OCI-LY7 (cell line): ENCODE measurements at regions of chr7 and their contacts with region 1.

Region 1: DNA sequence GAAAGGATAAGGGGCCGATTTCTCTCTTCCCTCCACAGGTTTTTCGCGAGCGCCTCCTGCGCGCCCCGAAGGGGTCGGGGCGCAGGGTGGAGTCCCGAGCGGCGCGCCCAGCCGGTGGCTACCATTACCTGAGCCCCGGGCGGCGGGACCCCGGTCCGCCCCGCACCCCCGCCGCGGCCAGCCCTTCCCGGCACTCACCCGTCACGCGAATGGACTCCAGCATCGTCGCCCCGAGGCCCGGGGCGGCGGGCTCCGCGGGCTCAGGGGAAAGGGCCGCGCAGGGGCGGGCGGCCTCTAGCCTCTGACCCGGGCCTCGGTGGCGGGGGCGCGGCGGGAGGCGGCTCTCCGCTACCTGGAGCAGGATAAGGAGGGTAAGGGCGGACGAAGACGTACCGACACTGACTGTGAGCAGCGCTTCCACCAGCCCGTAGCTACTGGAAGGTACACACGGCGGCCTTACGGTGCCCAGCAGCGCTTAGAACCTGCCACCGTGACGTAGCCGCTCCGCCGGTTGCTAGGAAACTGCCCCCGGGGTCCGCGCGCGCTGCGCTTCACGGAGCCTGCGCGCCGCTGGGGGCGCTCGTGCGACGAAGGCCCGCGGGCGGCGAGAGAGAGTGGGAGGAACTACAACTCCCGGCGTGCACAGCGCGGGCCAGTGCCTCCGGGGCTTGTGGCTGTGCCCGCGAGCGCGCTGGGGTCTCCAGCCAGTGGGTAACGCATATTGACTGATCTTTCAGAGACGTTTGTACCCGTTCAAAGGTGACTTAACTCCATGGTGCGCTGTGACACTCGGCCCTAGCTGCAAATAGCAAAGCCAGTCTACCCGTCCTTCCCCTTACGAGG is 22.7 kb upstream of the ANLN start:
- DNase-seq: peak; percentile 90
- H3K4me3 ChIP-seq: peak overlapping the region; percentile 71
- H3K27ac ChIP-seq: no peak overlapping the region
- H3K4me1 ChIP-seq: peaks cover 5% of the 10 kb centered on the region
- CTCF ChIP-seq: peak; percentile 84

Region 2: DNA sequence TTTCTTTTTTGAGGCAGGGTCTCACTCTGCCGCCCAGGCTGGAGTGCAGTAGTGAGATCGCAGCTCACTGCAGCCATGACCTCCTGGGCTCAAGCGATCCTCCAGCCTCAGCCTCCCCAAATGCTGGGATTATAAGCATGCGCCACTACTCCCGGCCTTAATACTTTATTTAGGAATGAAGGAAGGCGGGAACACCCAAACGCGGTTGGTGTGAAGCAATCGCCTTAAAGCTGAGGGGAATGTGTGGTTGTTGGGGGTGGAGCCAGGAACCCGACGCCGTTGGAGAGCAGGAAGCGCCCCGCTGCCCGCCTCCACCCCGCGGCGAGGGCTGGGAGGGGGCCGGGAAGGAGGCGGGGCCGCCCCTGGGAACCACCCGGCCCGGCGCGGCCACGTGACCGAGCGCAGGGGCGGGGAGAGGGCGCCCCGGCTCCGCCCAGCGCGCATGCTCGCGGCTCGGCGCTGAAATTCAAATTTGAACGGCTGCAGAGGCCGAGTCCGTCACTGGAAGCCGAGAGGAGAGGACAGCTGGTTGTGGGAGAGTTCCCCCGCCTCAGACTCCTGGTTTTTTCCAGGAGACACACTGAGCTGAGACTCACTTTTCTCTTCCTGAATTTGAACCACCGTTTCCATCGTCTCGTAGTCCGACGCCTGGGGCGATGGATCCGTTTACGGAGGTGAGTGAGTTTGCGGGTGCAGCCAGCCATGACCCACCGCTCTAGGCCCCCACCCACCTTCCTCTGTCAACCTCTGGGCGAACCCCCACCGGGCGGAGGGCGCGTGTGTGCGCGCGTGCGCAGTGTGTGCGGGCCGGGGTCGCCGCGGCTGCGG is 22.6 kb after region 1 on chr7 and contains the start of gene ANLN:
- CTCF ChIA-PET with region 1: interaction called, 5 read pairs
- POLR2A ChIA-PET with region 1: interaction called, 10 read pairs
- intact Hi-C with region 1: no loop called
- DNase-seq: peak; percentile 92
- H3K4me3 ChIP-seq: peak within 1 kb of the TSS; percentile 85
- H3K27ac ChIP-seq: peak within 1 kb of the TSS; percentile 82
- H3K4me1 ChIP-seq: peaks cover 32% of the 10 kb centered on the region
- CTCF ChIP-seq: no peak
- total RNA-seq, gene ANLN: 47.3 and 56.5 TPM in 2 replicates

Region 3: DNA sequence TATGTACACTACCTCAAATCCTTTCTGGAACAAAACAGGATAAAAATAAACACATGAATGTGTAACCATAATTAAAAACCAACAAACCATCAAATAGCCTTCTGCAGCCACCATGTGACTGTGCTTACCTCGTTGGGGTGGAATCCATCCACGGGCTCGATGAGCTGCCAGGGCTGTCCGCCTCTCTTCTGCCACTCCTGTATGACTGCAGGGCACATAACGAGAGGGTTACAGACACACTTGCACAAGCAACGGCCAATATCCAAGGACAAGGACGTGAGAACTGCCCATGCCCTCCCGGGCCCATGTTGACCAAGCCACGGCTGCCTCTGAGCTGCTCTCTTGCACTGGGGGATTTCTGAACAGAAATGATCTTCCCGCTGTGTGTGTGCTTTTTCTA is 155.0 kb after region 1 on chr7:
- CTCF ChIA-PET with region 1: no interaction called
- POLR2A ChIA-PET with region 1: no interaction called
- intact Hi-C with region 1: no loop called
- DNase-seq: no peak
- H3K4me3 ChIP-seq: no peak overlapping the region
- H3K27ac ChIP-seq: no peak overlapping the region
- H3K4me1 ChIP-seq: no peaks in the 10 kb centered on the region
- CTCF ChIP-seq: no peak